Activated T-helper 1 cell treated with anti-CD3 and anti-CD28 coated beads, Interleukin-12 subunit alpha, Interleukin-12 subunit beta, Interleukin-2, Interleukin-4 antibody, amounts not matched to agents 30 ng/mL and 10 ng/mL and 1 ng/mL, durations not matched to agents 14 hours and 24 hours and 36 hours (primary cell): ENCODE measurements at regions of chr2 and their contacts with region 1.

Region 1: DNA sequence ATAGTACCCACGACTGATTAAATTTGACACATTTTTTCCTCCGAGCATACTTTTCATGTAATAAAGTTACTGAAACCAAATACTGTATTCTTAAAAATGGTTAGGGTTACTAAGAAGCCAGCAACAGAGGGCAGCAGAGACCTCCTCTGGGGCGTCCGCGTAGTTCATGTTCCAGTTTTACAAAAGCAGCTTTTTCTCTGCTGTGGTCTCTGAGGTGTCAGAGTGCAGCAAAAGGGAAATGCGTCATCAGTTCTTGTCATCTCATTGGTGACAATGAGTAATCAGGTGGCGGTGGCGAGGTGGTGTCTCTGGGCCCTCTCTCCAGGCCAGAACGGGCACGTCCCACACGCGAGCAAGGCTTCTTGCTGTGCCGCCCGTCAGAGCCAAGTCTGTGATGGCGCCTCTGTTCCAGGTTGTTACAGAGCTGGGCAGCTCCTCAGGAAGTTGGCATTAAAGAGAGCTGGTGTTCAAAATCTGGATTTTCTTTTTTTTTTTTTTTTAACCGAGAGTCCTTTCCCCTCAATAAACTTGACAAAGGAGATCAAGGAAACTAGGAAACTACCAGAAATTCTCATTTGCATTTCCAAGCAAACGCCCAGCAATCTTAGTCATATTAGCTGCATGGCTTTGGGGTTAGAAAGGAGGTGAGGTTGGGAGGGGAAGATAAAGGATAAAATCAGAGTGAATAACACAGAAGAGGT is 98.6 kb upstream of the BZW1 start:
- DNase-seq: peak; percentile 89
- H3K4me3 Mint-ChIP-seq: peak overlapping the region; percentile 79
- H3K27ac Mint-ChIP-seq: peak overlapping the region; percentile 99
- H3K4me1 Mint-ChIP-seq: peaks cover 44% of the 10 kb centered on the region
- H3K27me3 Mint-ChIP-seq: no peaks in the 10 kb centered on the region

Region 2: GRCh38 chr2:200373973-200374416 is 339.2 kb before region 1 on chr2:
- intact Hi-C with region 1: loop called (anchors 5 kb)
- DNase-seq: peak; percentile 49
- H3K4me3 Mint-ChIP-seq: peak overlapping the region; percentile 79
- H3K27ac Mint-ChIP-seq: peak overlapping the region; percentile 86
- H3K4me1 Mint-ChIP-seq: peaks cover 55% of the 10 kb centered on the region
- H3K27me3 Mint-ChIP-seq: no peaks in the 10 kb centered on the region

Region 3: GRCh38 chr2:200525882-200526651 is 187.1 kb before region 1 on chr2 and contains the start of gene SGO2:
- intact Hi-C with region 1: loop called (anchors 1 kb)
- DNase-seq: peak; percentile 95
- H3K4me3 Mint-ChIP-seq: peak within 1 kb of the TSS; percentile 94
- H3K27ac Mint-ChIP-seq: peak within 1 kb of the TSS; percentile 89
- H3K4me1 Mint-ChIP-seq: peaks cover 32% of the 10 kb centered on the region
- H3K27me3 Mint-ChIP-seq: no peaks in the 10 kb centered on the region
- total RNA-seq, gene SGO2: 20.5 and 20.9 TPM in 2 replicates

Region 4: DNA sequence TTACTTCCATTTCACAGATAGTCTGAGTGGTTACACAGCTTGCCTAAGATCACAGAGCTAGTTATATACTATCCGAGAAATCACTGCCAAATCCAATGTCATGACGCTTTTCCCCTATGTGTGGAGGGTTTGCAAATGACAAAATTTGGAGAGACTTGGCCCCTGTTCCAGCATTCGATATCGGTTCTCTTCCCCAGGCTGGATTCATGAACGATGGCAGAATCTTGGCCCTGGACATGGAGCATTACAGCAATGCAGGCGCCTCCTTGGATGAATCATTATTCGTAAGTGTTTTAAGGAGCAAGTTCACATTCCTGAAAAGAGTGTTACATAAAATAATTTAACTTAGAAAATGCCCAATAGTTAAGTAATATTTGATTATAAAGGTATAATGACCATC is 72.3 kb before region 1 on chr2:
- intact Hi-C with region 1: no loop called
- DNase-seq: no peak
- H3K4me3 Mint-ChIP-seq: no peak overlapping the region
- H3K27ac Mint-ChIP-seq: no peak overlapping the region
- H3K4me1 Mint-ChIP-seq: no peaks in the 10 kb centered on the region
- H3K27me3 Mint-ChIP-seq: peaks cover 2% of the 10 kb centered on the region

Region 5: GRCh38 chr2:200864176-200864976 is 151.2 kb after region 1 on chr2 and contains the start of gene CLK1:
- intact Hi-C with region 1: loop called (anchors 1 kb)
- DNase-seq: peak; percentile 92
- H3K4me3 Mint-ChIP-seq: peak within 1 kb of the TSS; percentile 93
- H3K27ac Mint-ChIP-seq: peak within 1 kb of the TSS; percentile 97
- H3K4me1 Mint-ChIP-seq: peaks cover 50% of the 10 kb centered on the region
- H3K27me3 Mint-ChIP-seq: no peaks in the 10 kb centered on the region
- total RNA-seq, gene CLK1: 91.7 and 99.5 TPM in 2 replicates

Region 6: GRCh38 chr2:201130524-201131186 is 417.5 kb after region 1 on chr2:
- intact Hi-C with region 1: loop called (anchors 2 kb)
- DNase-seq: peak; percentile 45
- H3K4me3 Mint-ChIP-seq: peak overlapping the region; percentile 90
- H3K27ac Mint-ChIP-seq: peak overlapping the region; percentile 99
- H3K4me1 Mint-ChIP-seq: peaks cover 56% of the 10 kb centered on the region
- H3K27me3 Mint-ChIP-seq: no peaks in the 10 kb centered on the region